Activated CD4-positive, alpha-beta memory T cell treated with anti-CD3 and anti-CD28 coated beads, Interleukin-2, amount 10 ng/mL, durations not matched to agents 7 days and 5 days (primary cell): ENCODE measurements at regions of chr9 and their contacts with region 1.

Region 1: DNA sequence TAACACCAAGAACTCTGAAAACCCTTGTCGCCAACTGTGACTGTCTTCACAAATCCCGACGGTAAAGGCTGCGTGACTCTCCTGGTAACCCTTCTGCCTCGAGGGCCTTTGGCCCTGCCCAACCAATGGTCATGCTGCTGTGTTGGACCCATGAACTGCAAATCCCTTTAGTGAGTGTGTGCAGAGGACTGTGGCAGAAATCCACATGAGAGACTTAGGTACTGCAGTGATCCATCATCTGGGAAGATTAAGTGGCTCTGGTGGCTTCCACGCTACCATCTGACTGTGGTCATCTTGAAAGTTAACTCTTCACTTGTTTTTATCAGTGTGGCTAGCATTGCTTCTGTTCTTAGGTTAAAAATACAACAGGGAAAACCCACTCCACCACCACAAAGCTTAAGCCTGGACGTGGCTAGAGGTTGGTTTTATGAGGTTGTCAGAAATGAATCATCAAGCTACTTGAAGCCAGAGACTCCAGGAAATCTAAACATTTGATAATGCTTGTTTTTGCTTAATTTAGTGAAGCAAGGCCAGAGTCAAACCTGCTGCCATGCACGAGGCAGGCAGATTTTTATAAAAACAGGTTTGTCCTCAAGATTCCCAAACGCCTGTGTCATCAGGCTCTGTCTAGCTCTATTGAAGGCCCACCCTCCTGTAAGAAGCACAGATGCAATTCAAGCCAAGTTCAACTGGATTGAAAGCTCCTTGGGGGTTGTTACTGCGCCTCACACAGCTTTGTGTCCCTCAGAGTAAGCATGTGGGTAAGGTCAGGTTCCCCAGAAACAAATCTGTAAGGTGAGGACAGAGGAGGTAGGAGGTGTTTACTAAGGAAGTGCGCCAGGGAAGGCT is 52.7 kb upstream of the ERCC6L2 start:
- DNase-seq: peak; percentile 60
- H3K4me3 Mint-ChIP-seq: no peak overlapping the region
- H3K27ac Mint-ChIP-seq: no peak overlapping the region
- H3K4me1 Mint-ChIP-seq: peaks cover 30% of the 10 kb centered on the region
- H3K27me3 Mint-ChIP-seq: peaks cover 22% of the 10 kb centered on the region

Region 2: DNA sequence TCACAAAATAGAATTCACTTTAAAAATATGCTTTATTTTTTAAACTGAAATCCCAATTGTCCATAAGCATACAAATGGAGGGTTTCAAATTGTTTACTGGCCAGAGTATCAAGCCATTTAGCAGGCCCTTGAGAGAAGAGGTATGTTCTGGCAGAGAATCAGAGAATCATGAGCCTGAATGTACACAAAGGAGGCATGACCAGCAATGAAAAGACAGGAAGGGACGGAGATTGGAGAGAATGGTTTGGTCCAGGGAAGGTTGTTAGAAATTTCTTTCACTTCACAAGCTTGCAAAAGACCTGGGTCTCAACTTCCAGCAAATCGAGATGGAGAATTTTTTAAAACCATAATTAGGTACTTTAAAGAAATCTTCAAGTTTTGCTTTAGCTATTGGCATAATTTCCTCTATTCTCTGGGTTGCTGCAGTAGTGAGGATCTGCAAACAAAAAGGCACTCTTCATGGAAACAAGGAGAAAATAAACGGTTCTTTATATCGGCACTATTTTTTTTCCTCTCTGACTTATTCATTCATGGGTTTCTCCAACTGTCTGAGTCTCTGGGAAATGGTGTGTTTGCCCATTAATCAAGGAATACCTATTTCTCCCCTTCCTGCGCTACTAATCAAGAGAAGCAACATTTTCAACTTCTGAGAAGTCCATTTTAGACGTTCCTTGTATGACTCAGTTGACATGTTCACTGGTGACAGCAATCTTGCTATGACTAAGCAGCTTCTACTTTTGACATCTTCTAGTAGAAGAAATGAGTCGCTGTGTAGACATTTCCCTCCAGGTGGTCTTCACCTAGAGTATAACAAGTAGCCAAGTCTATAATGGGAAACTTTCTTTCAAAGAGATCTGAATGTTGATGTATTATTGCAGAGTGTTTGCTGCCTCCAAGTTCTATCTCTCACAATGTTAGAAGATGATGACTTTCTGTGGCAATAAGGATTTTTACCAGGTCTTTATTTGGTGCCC is 29.5 kb after region 1 on chr9:
- CTCF ChIA-PET with region 1: no interaction called
- POLR2A ChIA-PET with region 1: interaction called, 16 read pairs
- DNase-seq: no peak
- H3K4me3 Mint-ChIP-seq: peak overlapping the region; percentile 32
- H3K27ac Mint-ChIP-seq: peak overlapping the region; percentile 29
- H3K4me1 Mint-ChIP-seq: peaks cover 35% of the 10 kb centered on the region
- H3K27me3 Mint-ChIP-seq: no peaks in the 10 kb centered on the region